Calu3 (cell line): ENCODE measurements at regions of chr20 and their contacts with region 1.

Region 1: DNA sequence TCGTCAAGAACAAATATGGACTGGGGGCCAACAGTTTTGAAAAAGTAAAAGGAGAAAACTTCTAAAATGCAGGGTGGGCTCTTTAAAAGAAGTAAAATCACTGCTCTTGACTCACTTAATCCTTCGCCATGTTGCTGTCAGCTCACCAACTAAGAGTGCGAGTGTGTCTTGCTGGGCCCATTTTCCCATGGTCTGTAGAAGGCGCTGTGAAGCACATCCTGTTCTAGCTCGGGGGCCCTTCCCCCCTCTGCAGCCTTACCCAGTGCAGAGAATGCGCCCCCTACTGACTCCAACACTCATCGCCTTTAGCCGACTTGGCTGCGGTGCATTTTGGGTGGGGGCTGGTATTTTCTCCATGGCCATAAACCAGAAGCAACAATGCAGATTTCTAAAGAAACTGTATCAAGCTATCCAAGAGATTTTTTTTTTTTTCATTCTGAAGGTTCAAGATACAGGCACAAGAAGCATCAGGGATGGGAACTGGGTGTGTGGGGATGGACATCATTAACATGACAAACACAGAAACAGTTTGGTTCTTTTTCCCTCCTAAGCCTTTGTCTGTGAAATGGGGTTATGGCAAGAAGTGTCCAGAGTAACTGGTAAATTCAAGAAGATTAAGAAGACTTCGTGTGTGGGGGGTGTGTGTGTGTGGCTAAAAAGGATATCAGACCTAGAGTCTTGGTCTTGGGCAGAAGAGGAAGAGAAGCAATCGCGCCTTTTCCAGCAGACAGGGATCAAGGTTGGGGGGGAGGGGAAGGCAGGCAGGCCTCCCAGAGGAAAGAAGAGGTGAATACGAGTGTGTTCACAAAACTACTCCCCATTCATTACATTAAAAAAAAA is 1.7 kb downstream of the ADNP start:
- DNase-seq: peak; percentile 98
- H3K4me3 Mint-ChIP-seq: peak overlapping the region; percentile 89
- H3K27ac Mint-ChIP-seq: peak overlapping the region; percentile 96
- H3K4me1 Mint-ChIP-seq: peaks cover 43% of the 10 kb centered on the region
- H3K27me3 Mint-ChIP-seq: no peaks in the 10 kb centered on the region
- CTCF ChIP-seq: peak; percentile 98

Region 2: DNA sequence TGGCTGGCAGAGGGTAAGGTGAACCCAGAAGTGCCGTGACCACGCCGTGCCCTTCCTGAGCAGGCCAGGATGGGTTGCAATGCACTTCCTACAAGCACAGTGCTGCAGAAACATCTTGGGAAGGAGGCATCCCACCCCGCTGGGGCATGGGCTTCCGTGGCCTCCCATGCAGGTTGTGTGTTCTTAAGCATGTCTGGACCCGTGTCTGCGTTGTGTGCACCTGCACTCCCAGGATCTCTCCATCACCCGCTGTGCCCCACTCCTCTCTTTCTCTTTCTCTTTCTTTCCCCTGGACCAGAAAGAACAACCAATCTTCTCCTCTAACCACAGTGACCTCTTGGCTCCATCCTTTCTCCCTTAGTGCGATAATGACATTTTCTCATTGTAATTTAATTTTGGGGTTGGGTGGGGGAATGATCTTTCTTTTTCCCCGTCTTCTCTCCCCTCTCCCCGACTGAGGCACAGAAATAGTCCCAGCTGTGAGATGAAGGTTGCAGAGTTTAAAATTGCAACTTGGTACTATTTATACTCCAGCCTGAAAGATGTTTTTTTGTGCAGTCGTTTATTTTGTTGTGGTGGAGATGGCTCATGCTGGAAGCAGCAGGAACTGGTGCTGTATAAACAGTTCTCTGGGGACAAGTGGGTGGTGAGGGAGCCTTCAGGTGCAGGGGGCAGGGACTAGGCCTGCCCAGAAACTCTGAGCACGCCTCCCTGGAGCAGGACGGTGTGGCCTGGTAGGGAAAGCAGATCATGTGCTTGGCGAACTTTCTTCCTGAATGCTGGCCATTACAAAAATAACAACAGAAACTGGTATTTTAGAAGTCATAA is 114.1 kb before region 1 on chr20:
- CTCF ChIA-PET with region 1: interaction called, 16 read pairs
- intact Hi-C with region 1: loop called (anchors 2 kb)
- DNase-seq: peak; percentile 24
- H3K4me3 Mint-ChIP-seq: no peak overlapping the region
- H3K27ac Mint-ChIP-seq: no peak overlapping the region
- H3K4me1 Mint-ChIP-seq: peaks cover 19% of the 10 kb centered on the region
- H3K27me3 Mint-ChIP-seq: no peaks in the 10 kb centered on the region
- CTCF ChIP-seq: no peak

Region 3: DNA sequence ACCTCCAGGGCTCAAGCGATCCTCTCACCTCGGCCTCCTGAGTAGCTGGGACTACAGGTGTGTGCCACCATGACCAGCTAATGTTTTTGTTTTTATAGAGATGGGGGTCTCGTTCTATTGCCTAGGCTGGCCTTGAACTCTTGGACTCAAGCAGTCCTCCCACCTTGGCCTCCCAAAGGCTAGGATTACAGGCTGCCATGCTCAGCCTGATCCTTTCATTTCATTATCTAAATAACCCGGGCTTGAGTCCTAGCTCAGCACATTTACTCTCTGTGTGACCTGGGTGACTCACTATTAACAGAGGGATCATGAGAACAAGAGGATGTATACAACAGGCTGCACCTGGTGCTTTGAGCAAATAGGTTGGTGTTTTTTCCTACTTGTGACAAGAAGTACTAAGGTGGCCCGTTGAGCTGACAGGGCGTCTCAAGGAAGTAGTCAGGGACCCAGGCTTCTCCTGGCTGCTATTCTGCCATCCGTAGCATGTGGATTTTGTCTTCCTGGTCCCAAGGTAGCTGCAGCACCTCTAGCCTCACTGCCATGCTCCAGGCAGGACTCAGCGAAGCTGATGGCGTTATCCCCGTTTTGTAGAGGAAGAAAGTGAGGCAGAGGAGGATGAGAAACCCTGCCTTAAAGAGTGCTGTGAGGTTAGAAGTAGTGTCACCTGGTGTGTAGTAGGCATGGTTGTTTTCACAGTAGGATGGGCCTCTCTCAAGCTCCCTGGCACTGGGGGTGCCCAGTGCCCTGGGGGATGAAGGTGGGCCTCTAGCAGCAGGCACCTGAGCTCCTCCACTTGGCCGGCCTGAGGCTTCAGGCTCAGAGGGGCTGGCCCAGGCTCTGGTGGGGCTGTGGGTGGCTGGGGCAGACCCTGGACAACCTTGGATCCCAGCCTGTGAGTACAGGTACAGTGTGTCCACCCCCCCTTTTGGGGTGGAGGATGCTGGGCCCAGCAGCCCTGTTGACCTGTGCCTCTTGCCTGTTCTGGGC is 60.7 kb before region 1 on chr20:
- CTCF ChIA-PET with region 1: interaction called, 11 read pairs
- intact Hi-C with region 1: no loop called
- DNase-seq: peak; percentile 38
- H3K4me3 Mint-ChIP-seq: no peak overlapping the region
- H3K27ac Mint-ChIP-seq: peak overlapping the region; percentile 36
- H3K4me1 Mint-ChIP-seq: peaks cover 18% of the 10 kb centered on the region
- H3K27me3 Mint-ChIP-seq: no peaks in the 10 kb centered on the region
- CTCF ChIP-seq: no peak

Region 4: GRCh38 chr20:50895111-50895830 is 34.2 kb before region 1 on chr20:
- CTCF ChIA-PET with region 1: interaction called, 10 read pairs
- intact Hi-C with region 1: no loop called
- DNase-seq: no peak
- H3K4me3 Mint-ChIP-seq: no peak overlapping the region
- H3K27ac Mint-ChIP-seq: no peak overlapping the region
- H3K4me1 Mint-ChIP-seq: peaks cover 24% of the 10 kb centered on the region
- H3K27me3 Mint-ChIP-seq: no peaks in the 10 kb centered on the region
- CTCF ChIP-seq: no peak